CD8-positive, alpha-beta T cell (primary cell): ENCODE measurements at regions of chr6 and their contacts with region 1.

Region 1: DNA sequence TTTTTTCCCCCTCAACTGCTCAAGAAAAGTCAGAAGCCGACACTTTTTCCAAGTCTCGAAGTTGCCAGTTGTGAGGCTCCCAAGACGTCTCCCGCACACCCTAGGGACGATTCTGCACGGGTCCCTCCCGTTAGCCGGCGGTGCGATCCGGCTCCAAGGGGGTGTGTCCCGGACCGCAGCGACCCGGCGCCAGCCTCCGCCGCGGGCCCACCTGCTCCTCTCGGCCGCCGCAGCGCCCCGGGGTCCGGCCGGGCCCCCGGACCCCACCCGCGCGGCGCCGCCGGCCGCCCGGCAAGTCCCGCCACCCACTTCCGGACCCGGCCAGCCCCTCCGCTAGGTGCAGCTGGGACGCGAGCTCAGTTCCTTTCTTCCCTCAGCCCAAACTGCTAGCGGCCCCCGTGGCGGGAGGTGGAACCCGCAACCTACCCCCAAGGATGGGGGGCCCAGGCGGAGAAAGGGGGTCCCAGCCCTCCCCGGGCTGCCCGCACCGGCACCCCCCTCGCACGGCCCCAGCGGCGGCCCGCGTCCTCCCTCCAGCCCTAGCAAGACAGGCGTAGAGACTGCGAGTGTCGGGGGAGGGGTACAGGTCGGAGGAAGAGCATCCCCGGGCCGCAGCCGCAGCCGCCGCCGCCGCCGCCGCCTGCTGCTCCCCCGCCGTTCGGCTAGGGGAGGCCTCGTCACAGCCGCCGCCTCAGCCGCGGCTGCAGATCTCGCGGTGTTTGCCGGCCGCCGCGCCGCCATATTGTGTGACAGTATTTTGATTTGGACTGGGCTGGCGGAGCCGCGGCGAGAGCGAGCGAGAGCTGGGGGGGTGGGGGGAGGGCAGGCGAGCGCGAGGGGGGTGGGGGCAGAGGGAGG is 485 bp upstream of the TAB2 start:
- DNase-seq: peak; percentile 77 to 96 (median 87)
- ATAC-seq: peak; percentile 70
- H3K4me3 ChIP-seq: peak overlapping the region; percentile 71 to 78
- H3K4me3 Mint-ChIP-seq: peak overlapping the region; percentile 89
- H3K27ac ChIP-seq: peak overlapping the region; percentile 75 to 87
- H3K27ac Mint-ChIP-seq: peak overlapping the region; percentile 88
- H3K4me1 ChIP-seq: peaks cover 32% of the 10 kb centered on the region
- H3K4me1 Mint-ChIP-seq: peaks cover 39% of the 10 kb centered on the region
- H3K27me3 ChIP-seq: no peaks in the 10 kb centered on the region
- H3K27me3 Mint-ChIP-seq: no peaks in the 10 kb centered on the region
- CTCF ChIP-seq: no peak

Region 2: GRCh38 chr6:148746363-148747144 is 570.5 kb before region 1 on chr6 and contains the start of gene UST:
- CTCF ChIA-PET with region 1: no interaction called
- POLR2A ChIA-PET with region 1: no interaction called
- intact Hi-C with region 1: loop called in 1 of 2 experiments (anchors 10 kb)
- DNase-seq: peak; percentile 48 to 89 (median 70)
- ATAC-seq: peak; percentile 61
- H3K4me3 ChIP-seq: peak within 1 kb of the TSS; percentile 76 to 86
- H3K4me3 Mint-ChIP-seq: peak within 1 kb of the TSS; percentile 94
- H3K27ac ChIP-seq: peak within 1 kb of the TSS in 1 of 2 experiments; percentile 63
- H3K27ac Mint-ChIP-seq: peak within 1 kb of the TSS; percentile 90
- H3K4me1 ChIP-seq: peaks cover 11% of the 10 kb centered on the region
- H3K4me1 Mint-ChIP-seq: peaks cover 26% of the 10 kb centered on the region
- H3K27me3 ChIP-seq: no peaks in the 10 kb centered on the region
- H3K27me3 Mint-ChIP-seq: peaks cover 19% of the 10 kb centered on the region
- CTCF ChIP-seq: peak; percentile 57
- total RNA-seq, gene UST: 0.90 to 1.0 TPM

Region 3: GRCh38 chr6:149140137-149140909 is 176.7 kb before region 1 on chr6:
- CTCF ChIA-PET with region 1: no interaction called
- POLR2A ChIA-PET with region 1: interaction called, 4 read pairs
- intact Hi-C with region 1: loop called (anchors 1 to 2 kb)
- DNase-seq: peak in 7 of 9 experiments; percentile 24 to 85 (median 62)
- ATAC-seq: peak; percentile 76
- H3K4me3 ChIP-seq: peak overlapping the region in 1 of 2 experiments; percentile 18
- H3K4me3 Mint-ChIP-seq: peak overlapping the region; percentile 71
- H3K27ac ChIP-seq: peak overlapping the region; percentile 65 to 89
- H3K27ac Mint-ChIP-seq: peak overlapping the region; percentile 98
- H3K4me1 ChIP-seq: peaks cover 26% of the 10 kb centered on the region
- H3K4me1 Mint-ChIP-seq: peaks cover 38% of the 10 kb centered on the region
- H3K27me3 ChIP-seq: no peaks in the 10 kb centered on the region
- H3K27me3 Mint-ChIP-seq: no peaks in the 10 kb centered on the region
- CTCF ChIP-seq: no peak

Region 4: GRCh38 chr6:149261364-149262040 is 55.5 kb before region 1 on chr6:
- CTCF ChIA-PET with region 1: no interaction called
- POLR2A ChIA-PET with region 1: interaction called, 4 read pairs
- intact Hi-C with region 1: loop called (anchors 1 to 2 kb)
- DNase-seq: peak in 2 of 9 experiments; percentile 18 to 49
- ATAC-seq: peak; percentile 82
- H3K4me3 ChIP-seq: no peak overlapping the region
- H3K4me3 Mint-ChIP-seq: peak overlapping the region; percentile 69
- H3K27ac ChIP-seq: no peak overlapping the region
- H3K27ac Mint-ChIP-seq: peak overlapping the region; percentile 93
- H3K4me1 ChIP-seq: peaks cover 46% of the 10 kb centered on the region
- H3K4me1 Mint-ChIP-seq: peaks cover 46% of the 10 kb centered on the region
- H3K27me3 ChIP-seq: no peaks in the 10 kb centered on the region
- H3K27me3 Mint-ChIP-seq: no peaks in the 10 kb centered on the region
- CTCF ChIP-seq: no peak

Region 5: DNA sequence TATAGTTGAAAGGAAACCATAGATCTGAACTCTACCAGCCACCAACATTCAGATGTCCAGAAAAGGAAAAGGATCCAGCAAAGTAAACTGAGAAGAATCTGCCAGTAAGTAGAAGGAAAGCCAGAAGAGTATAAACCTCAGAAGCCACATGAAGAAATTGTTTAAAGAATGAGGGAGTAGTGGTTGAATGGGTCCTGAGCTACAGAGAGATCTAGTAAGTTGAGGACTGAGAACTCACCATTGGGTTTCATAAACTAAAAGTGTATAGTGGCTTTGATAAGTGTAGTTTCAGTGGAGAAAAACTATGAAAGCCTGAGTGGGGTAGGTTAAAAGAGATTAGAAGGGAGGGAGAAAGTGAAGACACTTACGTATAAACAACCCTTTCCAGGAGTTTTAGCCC is 51.0 kb after region 1 on chr6:
- CTCF ChIA-PET with region 1: no interaction called
- POLR2A ChIA-PET with region 1: interaction called, 4 read pairs
- intact Hi-C with region 1: loop called (anchors 2 kb)
- DNase-seq: no peak
- ATAC-seq: no peak
- H3K4me3 ChIP-seq: no peak overlapping the region
- H3K4me3 Mint-ChIP-seq: no peak overlapping the region
- H3K27ac ChIP-seq: no peak overlapping the region
- H3K27ac Mint-ChIP-seq: no peak overlapping the region
- H3K4me1 ChIP-seq: peaks cover 67% of the 10 kb centered on the region
- H3K4me1 Mint-ChIP-seq: peaks cover 42% of the 10 kb centered on the region
- H3K27me3 ChIP-seq: no peaks in the 10 kb centered on the region
- H3K27me3 Mint-ChIP-seq: no peaks in the 10 kb centered on the region
- CTCF ChIP-seq: no peak

Region 6: DNA sequence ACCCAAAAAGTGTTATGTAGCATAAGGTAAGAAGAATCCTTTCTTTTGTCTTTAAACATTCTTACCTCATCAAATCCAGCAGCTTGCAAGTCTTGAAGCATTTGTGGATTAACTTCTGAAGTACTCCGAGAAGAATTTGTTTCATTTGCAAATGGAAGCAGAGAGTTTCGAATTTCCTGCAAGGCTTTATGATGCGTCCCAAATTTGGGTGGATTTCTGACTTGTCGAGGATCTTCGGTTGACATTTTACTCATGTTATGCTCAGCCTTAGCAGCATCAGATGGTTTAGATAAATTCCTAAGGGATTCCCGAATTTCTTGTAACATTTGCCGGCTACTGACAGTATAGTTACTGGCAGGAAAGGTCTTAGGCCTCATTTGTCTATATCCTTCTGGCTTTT is 384.7 kb after region 1 on chr6:
- CTCF ChIA-PET with region 1: no interaction called
- POLR2A ChIA-PET with region 1: no interaction called
- intact Hi-C with region 1: no loop called
- DNase-seq: no peak
- ATAC-seq: no peak
- H3K4me3 ChIP-seq: no peak overlapping the region
- H3K4me3 Mint-ChIP-seq: no peak overlapping the region
- H3K27ac ChIP-seq: no peak overlapping the region
- H3K27ac Mint-ChIP-seq: no peak overlapping the region
- H3K4me1 ChIP-seq: peaks cover 16% of the 10 kb centered on the region
- H3K4me1 Mint-ChIP-seq: peaks cover 61% of the 10 kb centered on the region
- H3K27me3 ChIP-seq: no peaks in the 10 kb centered on the region
- H3K27me3 Mint-ChIP-seq: no peaks in the 10 kb centered on the region
- CTCF ChIP-seq: no peak